Common myeloid progenitor, CD34-positive (primary cell): ENCODE measurements at regions of chr11 and their contacts with region 1.

Region 1: GRCh38 chr11:68146704-68147474 is 25.7 kb upstream of the CHKA start:
- DNase-seq: peak in 2 of 3 donors; percentile 33 to 54
- H3K4me3 ChIP-seq: no peak overlapping the region
- H3K27ac ChIP-seq: no peak overlapping the region
- H3K4me1 ChIP-seq: peaks cover 0 to 61% (median 49%) of the 10 kb centered on the region in 4 experiments
- H3K27me3 ChIP-seq: no peaks in the 10 kb centered on the region

Region 2: GRCh38 chr11:68082481-68082880 is 64.4 kb before region 1 on chr11:
- CTCF ChIA-PET with region 1: no interaction called
- POLR2A ChIA-PET with region 1: no interaction called
- DNase-seq: no peak
- H3K4me3 ChIP-seq: no peak overlapping the region
- H3K27ac ChIP-seq: no peak overlapping the region
- H3K4me1 ChIP-seq: peaks cover 0 to 5% (median 0%) of the 10 kb centered on the region in 4 experiments
- H3K27me3 ChIP-seq: no peaks in the 10 kb centered on the region

Region 3: GRCh38 chr11:68099474-68100405 is 47.1 kb before region 1 on chr11:
- CTCF ChIA-PET with region 1: no interaction called
- POLR2A ChIA-PET with region 1: interaction called, 11 read pairs
- DNase-seq: peak in 2 of 3 donors; percentile 51 to 61
- H3K4me3 ChIP-seq: peak overlapping the region in 4 of 7 experiments; percentile 30 to 66 (median 53)
- H3K27ac ChIP-seq: peak overlapping the region; percentile 33 to 56
- H3K4me1 ChIP-seq: peaks cover 0 to 19% (median 14%) of the 10 kb centered on the region in 4 experiments
- H3K27me3 ChIP-seq: no peaks in the 10 kb centered on the region

Region 4: GRCh38 chr11:68158580-68158979 is 11.7 kb after region 1 on chr11:
- CTCF ChIA-PET with region 1: interaction called, 11 read pairs
- POLR2A ChIA-PET with region 1: interaction called, 4 read pairs
- DNase-seq: no peak
- H3K4me3 ChIP-seq: no peak overlapping the region
- H3K27ac ChIP-seq: no peak overlapping the region
- H3K4me1 ChIP-seq: no peaks in the 10 kb centered on the region
- H3K27me3 ChIP-seq: no peaks in the 10 kb centered on the region